ENCODE measurements at regions of chr14 and their contacts with region 1.

Region 1: DNA sequence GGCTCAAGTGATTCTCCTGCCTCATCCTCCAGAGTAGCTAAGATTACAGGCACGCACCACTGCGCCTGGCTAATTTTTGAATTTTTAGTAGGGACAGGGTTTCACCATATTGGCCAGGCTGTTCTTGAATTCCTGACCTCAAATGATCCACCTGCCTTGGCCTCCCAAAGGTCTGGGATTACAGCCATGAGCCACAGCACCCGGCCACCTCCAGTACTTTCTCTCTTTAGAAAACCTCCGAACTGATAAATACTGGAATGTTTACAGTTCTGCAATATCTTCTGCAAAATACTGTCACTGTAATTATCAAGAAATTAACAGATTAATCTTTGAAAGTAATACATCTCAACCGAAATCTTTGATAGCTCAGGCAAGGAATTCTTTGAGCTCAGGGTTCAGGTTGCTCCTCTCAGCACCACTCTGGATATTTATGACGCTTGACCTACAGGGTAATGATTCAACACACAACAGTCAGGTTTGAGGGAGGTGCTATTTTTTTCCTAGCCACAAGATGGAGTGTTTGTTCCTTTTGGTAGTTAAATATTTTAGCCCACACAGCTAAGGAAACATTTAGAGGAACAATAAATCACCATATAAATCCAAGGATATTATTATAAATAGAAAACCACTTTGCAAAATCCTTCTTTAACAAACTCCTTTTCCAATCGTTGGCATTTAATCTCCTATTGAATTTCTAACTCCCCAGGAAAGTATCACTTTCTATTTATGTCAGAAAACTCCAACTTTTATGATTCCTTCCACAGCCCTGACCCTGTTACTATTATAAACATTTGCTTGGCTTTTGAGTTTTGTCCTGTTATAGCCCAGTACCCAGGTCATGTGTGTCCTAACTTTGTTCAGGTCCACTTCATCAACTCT is 48.6 kb upstream of the GTF2A1 start:
- DNase-seq: no peak
- ATAC-seq: peak; percentile 78

Region 2: GRCh38 chr14:81453166-81453766 is 183.9 kb after region 1 on chr14:
- intact Hi-C with region 1: loop called (anchors 5 kb)
- DNase-seq: no peak
- ATAC-seq: peak; percentile 51

Region 3: GRCh38 chr14:81464247-81465002 is 195.1 kb after region 1 on chr14:
- intact Hi-C with region 1: loop called (anchors 5 kb)
- DNase-seq: no peak
- ATAC-seq: peak; percentile 71

Region 4: DNA sequence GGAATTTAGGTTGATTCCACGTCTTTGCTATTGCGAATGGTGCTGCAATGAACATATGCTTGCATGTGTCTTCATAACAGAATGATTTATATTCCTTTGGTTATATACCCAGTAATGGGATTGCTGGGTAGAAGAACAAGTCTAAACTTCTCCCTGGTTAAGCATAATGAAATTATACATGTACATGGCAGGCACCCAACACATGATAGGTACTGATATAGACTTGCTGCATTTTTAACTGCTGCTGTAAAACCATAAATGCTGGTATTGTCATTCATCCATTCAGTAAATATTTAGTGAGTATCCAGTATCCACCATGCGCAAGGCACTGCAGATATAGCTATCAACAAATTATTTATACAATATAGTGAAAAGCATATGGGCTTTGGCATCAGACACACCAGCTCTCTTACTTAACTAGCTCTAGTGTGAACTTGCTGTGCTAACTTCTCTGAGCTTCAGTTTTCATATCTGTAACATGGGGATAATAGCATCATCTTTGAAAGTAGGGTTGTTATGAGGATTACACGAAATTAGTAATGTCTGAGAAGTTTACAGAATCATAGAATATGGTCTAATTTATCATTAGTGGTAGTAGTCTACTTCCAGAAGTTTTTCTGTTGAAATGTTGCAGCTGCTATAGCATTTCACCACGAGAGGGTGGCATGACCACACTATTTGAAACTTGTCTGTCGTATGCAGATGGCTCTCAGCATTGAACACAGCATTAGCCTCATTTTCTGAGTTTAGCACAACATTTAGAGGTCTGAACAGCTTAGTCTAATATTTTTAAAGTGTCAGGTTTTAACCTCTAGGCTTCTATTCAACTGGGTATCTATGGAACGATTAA is 296.3 kb after region 1 on chr14:
- intact Hi-C with region 1: no loop called
- DNase-seq: no peak
- ATAC-seq: peak; percentile 58